Mammary epithelial cell (primary cell): ENCODE measurements at regions of chr5 and their contacts with region 1.

Region 1: GRCh38 chr5:66891183-66891925 is 295.2 kb downstream of the MAST4 start:
- DNase-seq: peak; percentile 99
- H3K4me3 ChIP-seq: no peak overlapping the region
- H3K27ac ChIP-seq: peak overlapping the region; percentile 100
- H3K4me1 ChIP-seq: peaks cover 56% of the 10 kb centered on the region
- H3K27me3 ChIP-seq: no peaks in the 10 kb centered on the region
- CTCF ChIP-seq: no peak

Region 2: DNA sequence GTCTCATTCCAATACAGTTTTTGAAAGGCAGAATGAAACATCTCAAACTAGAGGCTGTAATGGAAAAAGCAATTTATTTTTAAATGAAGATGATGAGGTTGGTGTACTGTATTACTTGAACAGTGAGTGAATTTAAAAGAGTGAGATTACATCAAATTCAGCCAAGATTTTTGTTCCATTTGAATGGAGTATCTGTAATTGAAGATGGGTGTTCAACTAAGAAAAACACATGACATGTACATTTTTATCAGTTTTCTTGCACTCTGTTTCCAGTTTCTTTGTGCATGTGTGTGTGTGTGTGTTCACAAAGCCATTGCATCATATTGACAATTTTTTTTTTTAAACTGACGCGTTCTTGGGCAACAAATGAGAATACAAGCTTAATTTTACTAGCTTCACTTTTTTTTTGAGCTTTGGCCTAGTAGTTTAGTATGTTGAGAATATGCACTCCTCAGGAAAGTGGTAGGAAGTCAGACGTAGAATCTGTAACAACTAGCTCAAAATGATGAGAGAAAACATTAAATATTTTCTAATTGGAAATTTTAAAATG is 51.6 kb before region 1 on chr5:
- CTCF ChIA-PET with region 1: no interaction called
- dilution Hi-C with region 1: loop called (anchors 5 kb)
- in situ Hi-C with region 1: no loop called
- intact Hi-C with region 1: no loop called
- DNase-seq: no peak
- H3K4me3 ChIP-seq: no peak overlapping the region
- H3K27ac ChIP-seq: no peak overlapping the region
- H3K4me1 ChIP-seq: peaks cover 12% of the 10 kb centered on the region
- H3K27me3 ChIP-seq: no peaks in the 10 kb centered on the region
- CTCF ChIP-seq: no peak

Region 3: DNA sequence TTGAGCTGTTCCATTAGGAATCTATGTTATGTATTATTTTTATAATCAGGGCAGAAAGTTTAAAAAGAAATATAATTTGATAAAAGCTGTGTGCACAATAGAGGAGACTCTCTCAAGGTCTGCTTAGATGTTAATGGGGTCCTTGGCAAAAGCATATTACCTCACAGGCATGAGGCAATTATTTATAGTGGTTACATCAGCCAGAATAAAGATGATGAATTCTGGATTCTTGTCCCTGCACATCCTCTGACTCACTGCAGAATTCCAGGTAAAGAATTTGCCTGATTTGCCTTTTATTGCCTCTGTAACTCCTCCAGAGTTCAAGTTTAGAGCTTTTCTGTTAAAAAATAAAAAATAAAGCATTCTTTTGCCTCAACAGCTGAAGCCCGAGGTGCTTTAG is 41.6 kb before region 1 on chr5:
- CTCF ChIA-PET with region 1: no interaction called
- dilution Hi-C with region 1: no loop called
- in situ Hi-C with region 1: no loop called
- intact Hi-C with region 1: loop called (anchors 1 kb)
- DNase-seq: peak; percentile 84
- H3K4me3 ChIP-seq: peak overlapping the region; percentile 3 to 40 (median 29)
- H3K27ac ChIP-seq: peak overlapping the region; percentile 100
- H3K4me1 ChIP-seq: peaks cover 33% of the 10 kb centered on the region
- H3K27me3 ChIP-seq: no peaks in the 10 kb centered on the region
- CTCF ChIP-seq: no peak

Region 4: DNA sequence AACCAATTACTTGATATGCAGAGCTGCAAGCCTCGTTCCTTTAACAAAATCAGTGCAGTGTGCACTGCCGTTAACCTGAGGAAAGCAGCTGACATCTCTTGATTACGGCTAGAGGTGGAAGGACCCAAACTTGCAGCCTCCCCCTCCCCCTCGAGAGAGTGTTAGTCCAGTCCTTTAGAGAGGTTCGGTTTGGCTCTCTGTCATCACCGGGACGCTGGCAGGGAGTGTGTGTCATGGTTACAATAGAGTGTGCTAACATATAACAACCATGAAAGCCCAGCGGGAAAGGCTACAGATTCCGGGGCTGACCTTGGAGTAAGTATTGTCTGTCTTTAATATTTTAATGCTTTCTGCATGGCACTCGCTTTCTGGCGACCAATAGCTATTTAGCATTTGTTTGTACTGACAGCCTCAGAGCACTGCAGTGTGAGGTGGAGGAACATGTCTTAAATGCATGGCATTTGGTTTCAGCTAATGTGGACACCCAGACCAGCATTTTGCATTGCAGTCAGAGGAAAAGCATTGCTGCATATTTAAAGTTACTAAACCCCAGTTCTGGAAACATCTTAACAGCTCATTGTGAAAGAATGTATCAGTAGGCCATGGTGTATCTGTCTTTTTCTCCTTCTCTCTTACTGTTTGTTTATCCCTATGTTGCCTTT is 67.8 kb after region 1 on chr5:
- CTCF ChIA-PET with region 1: no interaction called
- dilution Hi-C with region 1: no loop called
- in situ Hi-C with region 1: loop called in 1 of 2 experiments (anchors 10 kb)
- intact Hi-C with region 1: no loop called
- DNase-seq: peak; percentile 45
- H3K4me3 ChIP-seq: peak overlapping the region; percentile 45 to 50 (median 49)
- H3K27ac ChIP-seq: peak overlapping the region; percentile 92
- H3K4me1 ChIP-seq: peaks cover 31% of the 10 kb centered on the region
- H3K27me3 ChIP-seq: no peaks in the 10 kb centered on the region
- CTCF ChIP-seq: no peak